PC-9 (cell line): ENCODE measurements at regions of chr2 and their contacts with region 1.

Region 1: GRCh38 chr2:152497481-152498052 is 162.6 kb downstream of the FMNL2 start:
- DNase-seq: peak; percentile 84 to 96
- H3K4me3 ChIP-seq: peak overlapping the region; percentile 35; the same call in 1 of the 2 replicates
- H3K27ac ChIP-seq: peak overlapping the region; percentile 95
- H3K4me1 ChIP-seq: peaks cover 44% of the 10 kb centered on the region
- H3K27me3 ChIP-seq: no peaks in the 10 kb centered on the region
- CTCF ChIP-seq: no peak

Region 2: DNA sequence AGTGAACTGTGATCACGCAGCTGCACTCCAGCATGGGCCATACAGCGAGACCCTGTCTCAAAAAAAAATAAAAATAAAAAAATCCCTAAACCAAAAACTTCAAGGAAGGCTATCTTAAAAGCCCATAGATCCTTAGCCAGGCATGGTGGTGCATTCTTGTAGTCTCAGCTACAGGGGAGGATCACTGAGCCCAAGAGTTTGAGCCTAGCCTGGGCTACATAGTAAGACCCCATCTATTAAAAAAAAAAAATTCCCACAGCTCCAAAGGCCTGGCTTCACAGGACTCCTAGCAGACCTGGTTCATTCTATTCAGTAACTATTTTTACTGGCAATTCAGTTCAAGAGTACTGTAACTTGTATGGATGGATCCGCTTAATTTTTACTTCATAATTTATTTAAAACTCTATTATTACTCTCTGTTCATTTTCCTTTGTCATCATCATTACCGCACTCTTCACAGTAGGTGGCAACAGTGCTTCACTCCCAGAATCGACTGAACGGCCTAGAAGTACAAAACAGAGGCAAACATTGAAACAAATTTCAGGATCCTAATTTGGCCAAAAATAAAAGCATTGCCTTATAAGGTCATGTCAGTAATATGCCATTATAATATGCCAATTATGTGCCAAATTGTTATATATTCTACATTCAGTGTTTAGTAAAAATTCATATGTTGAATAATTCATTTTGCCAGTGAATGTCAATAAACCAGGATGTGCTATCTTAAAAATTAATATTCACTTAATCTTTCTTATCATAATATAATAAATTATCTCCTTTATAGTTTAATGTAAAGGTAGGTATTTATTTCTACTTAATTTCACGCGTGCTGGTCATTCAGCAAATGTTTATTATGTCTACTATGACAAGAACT is 307.7 kb before region 1 on chr2:
- CTCF ChIA-PET with region 1: interaction called, 3 read pairs
- POLR2A ChIA-PET with region 1: no interaction called
- intact Hi-C with region 1: loop called (anchors 1 kb)
- DNase-seq: peak; percentile 39 to 53
- H3K4me3 ChIP-seq: no peak overlapping the region
- H3K27ac ChIP-seq: no peak overlapping the region
- H3K4me1 ChIP-seq: no peaks in the 10 kb centered on the region
- H3K27me3 ChIP-seq: no peaks in the 10 kb centered on the region
- CTCF ChIP-seq: peak; percentile 85

Region 3: DNA sequence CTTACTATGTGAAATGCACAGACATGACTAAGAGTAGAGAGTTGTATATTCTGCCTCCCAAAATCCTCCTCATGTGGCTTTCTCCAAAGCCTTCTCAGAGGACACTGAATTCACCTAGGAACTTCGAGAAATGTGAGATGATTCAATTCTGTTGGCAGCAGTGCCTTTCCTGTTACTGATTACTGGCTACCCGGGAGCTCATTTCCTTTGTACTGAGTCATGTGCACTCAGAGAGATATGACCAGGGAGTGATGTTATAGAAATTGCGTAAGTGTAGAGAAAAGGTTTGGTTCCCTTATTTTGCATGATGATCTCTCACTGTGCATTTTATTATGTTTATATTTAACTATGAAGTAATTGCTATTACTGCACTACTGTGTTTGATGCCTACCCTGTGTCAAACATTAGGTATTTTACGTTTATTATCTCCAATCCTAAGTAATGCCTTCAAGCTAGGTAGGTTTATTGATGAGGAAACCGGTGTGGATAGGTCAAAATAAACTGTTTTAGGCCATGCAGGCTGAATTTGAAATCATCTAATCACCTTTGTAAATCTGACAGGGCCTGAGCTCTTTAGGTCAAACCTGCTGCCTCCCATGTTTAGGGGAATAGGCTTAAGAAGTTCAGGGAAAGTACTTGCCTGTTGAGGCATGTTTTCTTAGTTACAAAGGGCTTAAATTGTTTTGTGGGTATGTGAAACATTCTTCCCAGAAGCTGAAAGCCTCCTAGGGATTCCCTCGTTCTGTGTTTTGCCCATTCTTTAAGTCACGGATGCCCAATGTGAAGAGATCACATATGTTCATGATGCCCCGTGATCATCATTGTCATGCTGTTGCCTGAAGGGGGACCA is 75.8 kb before region 1 on chr2:
- CTCF ChIA-PET with region 1: no interaction called
- POLR2A ChIA-PET with region 1: no interaction called
- intact Hi-C with region 1: loop called (anchors 2 kb)
- DNase-seq: peak; percentile 50 to 95
- H3K4me3 ChIP-seq: no peak overlapping the region
- H3K27ac ChIP-seq: peak overlapping the region; percentile 81
- H3K4me1 ChIP-seq: peaks cover 32% of the 10 kb centered on the region
- H3K27me3 ChIP-seq: no peaks in the 10 kb centered on the region
- CTCF ChIP-seq: no peak

Region 4: DNA sequence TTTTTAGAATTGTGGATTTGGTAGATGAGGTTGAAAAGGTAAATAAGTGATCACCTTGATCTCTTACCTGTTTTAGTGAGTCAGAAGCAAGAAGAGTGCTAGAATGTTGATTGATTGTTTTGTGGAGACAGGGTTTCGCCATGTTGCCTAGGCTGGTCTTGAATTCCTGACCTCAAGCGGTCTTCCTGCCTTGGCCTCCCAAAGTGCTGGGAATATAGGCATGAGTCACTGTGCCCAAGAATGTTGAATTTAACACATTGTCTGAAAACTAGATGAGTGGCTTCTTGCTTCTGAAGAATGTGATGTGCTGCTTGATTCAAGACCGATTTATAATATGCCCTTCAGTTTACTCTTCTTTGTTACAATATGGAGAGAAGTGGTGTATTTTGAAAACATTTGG is 41.3 kb before region 1 on chr2:
- CTCF ChIA-PET with region 1: no interaction called
- POLR2A ChIA-PET with region 1: no interaction called
- intact Hi-C with region 1: loop called (anchors 2 kb)
- DNase-seq: peak; percentile 66 to 98
- H3K4me3 ChIP-seq: no peak overlapping the region; the same call in 1 of the 2 replicates
- H3K27ac ChIP-seq: peak overlapping the region; percentile 90
- H3K4me1 ChIP-seq: peaks cover 36% of the 10 kb centered on the region
- H3K27me3 ChIP-seq: no peaks in the 10 kb centered on the region
- CTCF ChIP-seq: no peak

Region 5: DNA sequence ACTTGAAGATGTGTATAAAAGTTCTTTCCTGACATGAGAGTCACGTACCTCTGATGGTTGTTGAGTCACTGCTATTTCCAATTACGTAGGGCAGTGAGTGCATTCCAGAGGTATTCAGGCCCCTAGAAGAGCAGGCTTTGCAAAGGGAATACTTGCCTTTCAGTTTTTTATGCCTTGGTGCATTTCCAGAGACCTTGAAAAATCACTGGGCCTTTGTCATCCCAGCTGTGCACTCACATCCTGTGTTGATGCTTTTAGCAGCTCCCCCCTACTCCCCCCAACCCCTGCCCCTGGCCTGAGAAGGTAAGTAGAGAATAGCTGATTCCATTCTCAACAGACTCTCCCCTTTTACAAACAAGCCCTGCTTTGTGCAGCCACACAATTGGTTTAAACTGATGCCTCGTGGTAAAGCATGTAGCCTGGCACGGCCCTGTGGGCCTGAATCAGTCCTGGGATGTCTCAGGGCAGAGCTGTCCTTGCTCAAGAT is 45.5 kb after region 1 on chr2:
- CTCF ChIA-PET with region 1: no interaction called
- POLR2A ChIA-PET with region 1: no interaction called
- intact Hi-C with region 1: loop called (anchors 2 kb)
- DNase-seq: peak; percentile 35 to 90
- H3K4me3 ChIP-seq: peak overlapping the region; percentile 10; the same call in 1 of the 2 replicates
- H3K27ac ChIP-seq: peak overlapping the region; percentile 78
- H3K4me1 ChIP-seq: peaks cover 37% of the 10 kb centered on the region
- H3K27me3 ChIP-seq: no peaks in the 10 kb centered on the region
- CTCF ChIP-seq: no peak

Region 6: GRCh38 chr2:152611458-152612231 is 114.1 kb after region 1 on chr2:
- CTCF ChIA-PET with region 1: no interaction called
- POLR2A ChIA-PET with region 1: no interaction called
- intact Hi-C with region 1: loop called (anchors 10 kb)
- DNase-seq: peak in 1 of 2 experiments; percentile 34
- H3K4me3 ChIP-seq: no peak overlapping the region
- H3K27ac ChIP-seq: no peak overlapping the region; the same call in 1 of the 2 replicates
- H3K4me1 ChIP-seq: peaks cover 20% of the 10 kb centered on the region; the same call in 1 of the 2 replicates
- H3K27me3 ChIP-seq: no peaks in the 10 kb centered on the region
- CTCF ChIP-seq: no peak

Region 7: GRCh38 chr2:154452906-154453493 is 1955.4 kb after region 1 on chr2:
- CTCF ChIA-PET with region 1: no interaction called
- POLR2A ChIA-PET with region 1: no interaction called
- intact Hi-C with region 1: no loop called
- DNase-seq: no peak
- H3K4me3 ChIP-seq: no peak overlapping the region
- H3K27ac ChIP-seq: no peak overlapping the region
- H3K4me1 ChIP-seq: no peaks in the 10 kb centered on the region
- H3K27me3 ChIP-seq: no peaks in the 10 kb centered on the region
- CTCF ChIP-seq: peak; percentile 53